ENCODE measurements at regions of chr16 and their contacts with region 1.

Region 1: DNA sequence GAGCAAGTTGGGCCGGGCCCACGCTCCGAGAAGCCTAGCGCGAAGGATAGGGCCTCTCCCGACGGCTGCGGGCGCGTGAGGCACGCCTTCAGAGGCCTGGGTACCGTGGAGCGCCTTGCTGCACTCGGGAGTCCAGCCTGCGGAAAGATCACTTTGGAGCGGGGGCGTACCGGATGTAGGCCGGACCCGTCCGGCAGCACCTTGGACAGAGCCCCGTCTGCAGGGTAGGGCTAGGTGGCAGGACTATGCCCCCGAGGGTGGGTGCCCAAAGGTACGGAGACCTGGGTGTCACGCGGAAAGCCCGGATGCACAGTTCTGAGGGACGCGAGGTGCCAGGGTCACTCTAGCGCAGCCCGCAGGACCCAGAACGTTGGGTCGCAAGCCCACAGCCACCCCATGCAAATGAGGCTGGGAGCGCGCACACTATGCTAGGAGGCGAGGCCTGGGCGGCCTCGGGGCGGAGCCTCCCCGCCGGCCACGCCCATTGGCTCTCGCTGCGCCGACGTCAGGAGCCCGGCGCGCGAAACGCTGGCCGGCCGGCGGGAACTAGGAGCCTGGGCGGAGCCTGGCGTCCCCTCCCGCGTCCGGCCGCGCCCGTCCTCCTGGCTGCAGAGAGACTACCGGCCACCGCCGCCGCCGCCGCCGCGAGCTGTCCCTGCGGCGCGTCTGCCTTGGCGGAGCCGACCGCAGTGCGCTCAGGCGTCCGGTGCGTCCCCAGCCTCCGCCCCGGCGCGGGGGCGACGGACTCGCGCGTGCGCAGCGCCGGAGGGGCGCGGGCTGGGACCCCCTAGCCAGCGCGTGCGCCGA is at the start of gene PAQR4:
- H3K4me3 ChIP-seq: peak within 1 kb of the TSS; percentile 74
- H3K27ac ChIP-seq: peak within 1 kb of the TSS; percentile 80
- H3K4me1 ChIP-seq: peaks cover 12% of the 10 kb centered on the region
- CTCF ChIP-seq: no peak

Region 2: DNA sequence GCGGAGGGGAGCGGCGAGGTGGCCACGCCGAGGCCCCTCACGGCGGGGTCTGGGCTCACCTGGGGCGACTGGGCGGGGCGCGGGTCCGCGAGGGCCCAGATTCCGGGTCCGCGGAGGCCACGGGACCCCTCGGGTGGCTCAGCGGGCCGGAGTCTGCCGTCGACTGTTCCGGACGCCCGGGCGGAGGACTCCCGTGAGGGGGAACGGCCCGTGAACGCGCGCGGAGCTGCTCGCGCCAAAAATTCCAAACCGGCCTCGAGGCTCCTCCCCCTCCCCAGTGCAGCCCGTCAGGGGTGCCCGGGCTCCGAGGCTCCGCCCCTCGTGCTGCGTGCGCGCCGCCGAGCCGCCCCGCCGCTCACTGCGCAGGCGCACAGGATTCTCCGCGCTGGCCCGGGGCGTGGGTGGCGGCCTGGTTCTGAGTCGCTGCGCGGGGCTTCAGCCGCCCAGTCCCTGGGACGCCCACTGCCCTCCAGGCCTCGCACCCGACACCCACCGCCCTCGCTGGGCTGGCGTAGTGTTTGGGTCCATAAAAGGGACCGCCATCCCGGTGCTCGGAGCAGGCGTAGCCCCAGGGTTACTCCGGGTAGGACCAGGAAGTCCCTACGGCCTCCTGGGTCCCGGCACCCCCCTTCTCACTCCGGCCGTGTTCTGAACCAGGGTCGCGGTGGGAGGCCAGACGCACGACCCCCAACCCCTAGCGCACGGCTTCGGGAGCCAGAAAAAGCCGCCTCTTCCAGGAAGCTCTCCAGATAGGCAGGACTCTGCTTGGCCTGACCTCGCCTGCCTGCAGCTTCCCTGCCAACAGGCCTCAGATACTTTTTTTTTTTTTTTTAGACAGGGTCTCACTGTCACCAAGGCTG is 11.5 kb after region 1 on chr16 and contains the start of gene PKMYT1:
- CTCF ChIA-PET with region 1: interaction called, 12 read pairs
- POLR2A ChIA-PET with region 1: interaction called, 25 read pairs
- H3K4me3 ChIP-seq: peak within 1 kb of the TSS; percentile 84
- H3K27ac ChIP-seq: peak within 1 kb of the TSS; percentile 86
- H3K4me1 ChIP-seq: no peaks in the 10 kb centered on the region
- CTCF ChIP-seq: no peak